ENCODE measurements at regions of chr20 and their contacts with region 1.

Region 1: GRCh38 chr20:53021934-53022333 is 49.8 kb downstream of the TSHZ2 start:
- DNase-seq: peak; percentile 80
- H3K4me3 Mint-ChIP-seq: peak overlapping the region; percentile 65
- H3K27ac Mint-ChIP-seq: peak overlapping the region; percentile 85
- H3K4me1 Mint-ChIP-seq: peaks cover 71% of the 10 kb centered on the region
- H3K27me3 Mint-ChIP-seq: no peaks in the 10 kb centered on the region

Region 2: DNA sequence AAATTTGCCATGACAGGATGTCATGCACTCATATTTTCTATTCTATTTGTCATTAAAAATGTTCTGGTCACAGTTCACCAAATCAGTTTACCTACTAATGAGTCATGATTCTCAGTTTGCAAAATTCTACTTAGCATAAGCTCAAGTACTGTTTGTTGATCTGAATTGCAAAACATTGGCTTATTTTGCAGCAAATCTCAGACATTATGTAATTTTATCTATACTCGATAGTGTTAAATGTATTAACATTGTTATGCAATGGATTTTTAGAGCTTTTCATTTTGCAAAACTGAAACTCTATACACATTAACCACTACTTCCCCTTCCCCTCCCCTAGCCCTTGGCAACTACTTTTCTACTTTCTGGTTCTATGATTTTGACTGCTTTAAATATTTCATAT is 616.5 kb before region 1 on chr20:
- intact Hi-C with region 1: loop called (anchors 10 kb)
- DNase-seq: no peak
- H3K4me3 Mint-ChIP-seq: no peak overlapping the region
- H3K27ac Mint-ChIP-seq: peak overlapping the region; percentile 65
- H3K4me1 Mint-ChIP-seq: peaks cover 47% of the 10 kb centered on the region
- H3K27me3 Mint-ChIP-seq: no peaks in the 10 kb centered on the region

Region 3: GRCh38 chr20:52981051-52981450 is 40.9 kb before region 1 on chr20:
- intact Hi-C with region 1: no loop called
- DNase-seq: no peak
- H3K4me3 Mint-ChIP-seq: no peak overlapping the region
- H3K27ac Mint-ChIP-seq: peak overlapping the region; percentile 42
- H3K4me1 Mint-ChIP-seq: peaks cover 44% of the 10 kb centered on the region
- H3K27me3 Mint-ChIP-seq: no peaks in the 10 kb centered on the region

Region 4: DNA sequence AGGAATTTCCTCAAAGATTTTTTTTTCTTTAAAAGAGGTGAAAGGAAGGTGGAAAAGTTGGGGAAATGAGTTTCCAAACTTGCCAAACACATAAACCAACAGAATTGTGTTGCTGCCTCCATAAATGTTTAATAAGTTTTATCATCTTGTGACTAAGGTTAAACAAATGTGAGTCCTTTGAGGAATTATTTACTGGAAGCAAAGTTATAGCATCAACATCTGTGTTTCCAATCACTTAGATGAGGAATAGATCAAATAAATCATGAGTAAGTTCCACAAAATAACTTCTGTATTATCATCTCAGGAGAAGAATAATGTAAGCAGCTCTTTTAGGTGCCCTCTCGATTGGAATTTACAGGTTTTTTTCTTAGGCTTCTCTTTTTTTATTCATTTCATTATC is 29.3 kb before region 1 on chr20:
- intact Hi-C with region 1: no loop called
- DNase-seq: no peak
- H3K4me3 Mint-ChIP-seq: no peak overlapping the region
- H3K27ac Mint-ChIP-seq: no peak overlapping the region
- H3K4me1 Mint-ChIP-seq: peaks cover 17% of the 10 kb centered on the region
- H3K27me3 Mint-ChIP-seq: no peaks in the 10 kb centered on the region

Region 5: GRCh38 chr20:53040693-53041589 is 19.0 kb after region 1 on chr20:
- intact Hi-C with region 1: no loop called
- DNase-seq: no peak
- H3K4me3 Mint-ChIP-seq: no peak overlapping the region
- H3K27ac Mint-ChIP-seq: no peak overlapping the region
- H3K4me1 Mint-ChIP-seq: peaks cover 18% of the 10 kb centered on the region
- H3K27me3 Mint-ChIP-seq: no peaks in the 10 kb centered on the region

Region 6: DNA sequence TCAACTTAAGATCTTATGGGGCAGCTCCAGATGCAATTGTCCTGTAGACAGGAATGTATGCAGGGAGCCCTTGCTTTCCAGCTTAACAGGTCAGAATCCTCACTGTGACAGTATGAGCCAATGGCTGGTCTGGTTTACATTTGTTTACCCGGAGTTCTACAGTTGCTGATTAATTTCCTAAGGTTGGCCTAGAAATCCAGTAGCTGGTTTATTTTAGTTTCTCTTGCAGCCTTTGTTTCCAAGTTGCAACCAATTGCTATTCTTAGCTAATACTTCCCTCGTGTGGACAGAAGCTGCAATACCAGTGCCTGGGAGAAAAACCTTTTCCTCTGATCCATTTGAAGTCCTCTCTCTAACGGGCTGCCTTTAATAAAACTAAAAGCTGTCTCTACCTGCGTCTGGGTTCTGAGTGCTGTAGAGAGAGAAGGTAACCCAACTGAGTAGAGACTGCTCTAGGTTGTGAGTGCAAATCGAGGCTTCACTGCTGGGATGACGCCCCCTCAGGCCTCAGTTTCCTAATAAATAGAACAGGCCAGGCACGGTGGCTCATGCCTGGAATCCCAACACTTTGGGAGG is 525.8 kb after region 1 on chr20:
- intact Hi-C with region 1: no loop called
- DNase-seq: peak; percentile 84
- H3K4me3 Mint-ChIP-seq: no peak overlapping the region
- H3K27ac Mint-ChIP-seq: no peak overlapping the region
- H3K4me1 Mint-ChIP-seq: no peaks in the 10 kb centered on the region
- H3K27me3 Mint-ChIP-seq: no peaks in the 10 kb centered on the region

Measured in activated CD4-positive, alpha-beta T cell treated with anti-CD3 and anti-CD28 coated beads, Interleukin-2, amount 10 ng/mL, durations not matched to agents 24 days and 14 days (primary cell).